Activated CD8-positive, alpha-beta T cell treated with anti-CD3 and anti-CD28 coated beads, Interleukin-2, amount 10 ng/mL, durations not matched to agents 7 days and 5 days (primary cell): ENCODE measurements at regions of chr2 and their contacts with region 1.

Region 1: GRCh38 chr2:85561317-85561979 is at the start of gene GGCX:
- DNase-seq: peak; percentile 97
- ATAC-seq: peak; percentile 97
- H3K4me3 Mint-ChIP-seq: peak within 1 kb of the TSS; percentile 99
- H3K27ac Mint-ChIP-seq: peak within 1 kb of the TSS; percentile 99
- H3K4me1 Mint-ChIP-seq: peaks cover 38% of the 10 kb centered on the region
- H3K27me3 Mint-ChIP-seq: no peaks in the 10 kb centered on the region
- total RNA-seq, gene GGCX: 18.9 to 20.0 TPM

Region 2: DNA sequence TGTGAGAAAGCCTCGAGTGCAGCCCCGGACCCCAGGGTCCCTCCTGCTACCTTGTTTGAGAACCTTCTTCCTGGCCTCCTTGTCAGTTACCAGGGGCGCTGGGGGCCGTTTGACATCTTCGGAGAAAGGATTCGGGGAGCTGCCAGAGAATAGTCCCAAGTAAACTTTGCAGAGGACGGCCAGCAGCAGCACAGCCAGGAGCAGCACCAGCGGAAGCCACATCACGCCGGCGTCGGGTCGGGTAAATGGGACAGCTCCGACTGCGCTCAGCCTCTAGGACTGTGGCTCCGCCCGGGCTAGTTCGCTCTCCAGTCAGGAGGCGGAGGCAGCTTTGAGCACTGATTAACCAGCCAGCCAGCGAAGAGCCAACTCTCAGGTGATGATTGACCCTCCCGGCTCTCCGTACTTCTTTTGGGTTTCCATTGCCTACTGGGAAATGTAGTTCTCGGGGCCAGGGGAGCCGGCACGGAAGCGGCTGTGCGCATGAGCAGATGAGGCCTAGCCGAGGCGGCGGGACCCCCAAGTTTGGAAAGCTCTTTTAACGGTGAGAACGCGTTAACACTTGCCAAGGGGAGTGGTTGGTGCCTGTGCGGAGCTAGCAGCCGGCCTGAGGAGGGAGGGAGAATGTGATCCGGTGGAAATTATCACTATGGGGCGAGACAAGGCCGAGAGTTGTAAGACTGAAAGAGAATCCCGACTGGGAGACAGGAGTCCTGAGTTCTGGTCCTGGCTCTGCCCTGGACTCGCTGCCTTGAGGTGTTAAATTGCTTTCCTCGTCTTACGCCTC is 207.0 kb before region 1 on chr2 and contains the starts of genes ELMOD3 and RETSAT:
- CTCF ChIA-PET with region 1: interaction called, 3 read pairs
- POLR2A ChIA-PET with region 1: interaction called, 11 read pairs
- DNase-seq: peak; percentile 99
- ATAC-seq: peak; percentile 100
- H3K4me3 Mint-ChIP-seq: peak within 1 kb of the TSS; percentile 99
- H3K27ac Mint-ChIP-seq: peak within 1 kb of the TSS; percentile 99
- H3K4me1 Mint-ChIP-seq: peaks cover 47% of the 10 kb centered on the region
- H3K27me3 Mint-ChIP-seq: no peaks in the 10 kb centered on the region
- total RNA-seq, gene ELMOD3: 14.4 to 19.9 TPM
- total RNA-seq, gene RETSAT: 27.8 to 28.4 TPM

Region 3: DNA sequence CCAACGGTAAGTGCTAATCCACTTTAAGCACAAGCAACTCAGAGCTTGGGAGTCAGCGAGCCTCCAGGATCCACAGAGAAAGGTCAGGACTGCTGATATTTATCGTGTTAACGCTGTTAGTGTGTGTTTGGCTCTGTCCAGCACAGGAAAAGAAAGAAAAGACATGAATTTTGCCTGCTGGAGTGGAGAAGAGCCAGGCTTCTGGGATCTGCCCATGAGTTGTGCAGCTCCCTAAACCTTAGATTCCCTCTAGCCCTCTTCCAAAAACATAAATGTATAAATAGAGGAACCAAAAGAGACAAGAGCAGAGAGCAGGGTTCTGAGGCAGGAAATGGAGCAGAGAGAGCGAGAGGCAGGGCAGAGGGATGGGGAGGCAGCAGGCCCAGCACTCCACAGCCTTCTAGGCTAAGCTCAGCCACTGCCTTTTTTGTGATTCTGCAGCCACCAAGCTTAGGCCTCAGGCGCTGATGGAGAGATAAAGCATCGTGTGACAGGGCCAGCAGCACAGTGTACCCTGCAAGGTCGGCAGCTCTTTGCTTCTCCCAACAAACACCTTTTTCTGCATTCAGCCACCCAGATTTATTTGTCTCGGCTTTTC is 37.0 kb before region 1 on chr2:
- CTCF ChIA-PET with region 1: no interaction called
- POLR2A ChIA-PET with region 1: no interaction called
- DNase-seq: no peak
- ATAC-seq: no peak
- H3K4me3 Mint-ChIP-seq: no peak overlapping the region
- H3K27ac Mint-ChIP-seq: no peak overlapping the region
- H3K4me1 Mint-ChIP-seq: no peaks in the 10 kb centered on the region
- H3K27me3 Mint-ChIP-seq: peaks cover 21% of the 10 kb centered on the region